ENCODE measurements at regions of chr20 and their contacts with region 1.

Region 1: GRCh38 chr20:8774412-8774811 is 294.5 kb upstream of the PLCB4 start:
- DNase-seq: no peak
- H3K4me3 ChIP-seq: no peak overlapping the region
- H3K27ac ChIP-seq: no peak overlapping the region
- H3K27me3 ChIP-seq: no peaks in the 10 kb centered on the region
- CTCF ChIP-seq: no peak

Region 2: GRCh38 chr20:8583566-8584043 is 190.8 kb before region 1 on chr20:
- CTCF ChIA-PET with region 1: no interaction called
- POLR2A ChIA-PET with region 1: no interaction called
- DNase-seq: no peak
- H3K4me3 ChIP-seq: no peak overlapping the region
- H3K27ac ChIP-seq: no peak overlapping the region
- H3K27me3 ChIP-seq: no peaks in the 10 kb centered on the region
- CTCF ChIP-seq: no peak

Region 3: GRCh38 chr20:9353180-9353915 is 578.9 kb after region 1 on chr20:
- CTCF ChIA-PET with region 1: no interaction called
- POLR2A ChIA-PET with region 1: interaction called, 10 read pairs
- DNase-seq: no peak
- H3K4me3 ChIP-seq: no peak overlapping the region
- H3K27ac ChIP-seq: no peak overlapping the region
- H3K27me3 ChIP-seq: no peaks in the 10 kb centered on the region
- CTCF ChIP-seq: no peak; the same call in 1 of the 2 replicates